HEK293 (cell line): ENCODE measurements at regions of chr17 and their contacts with region 1.

Region 1: GRCh38 chr17:59311130-59311920 is 20.1 kb upstream of the YPEL2 start:
- H3K4me3 ChIP-seq: no peak overlapping the region
- H3K27ac ChIP-seq: no peak overlapping the region
- H3K4me1 ChIP-seq: no peaks in the 10 kb centered on the region
- CTCF ChIP-seq: peak; percentile 88

Region 2: GRCh38 chr17:59026176-59026939 is 285.0 kb before region 1 on chr17:
- CTCF ChIA-PET with region 1: no interaction called
- POLR2A ChIA-PET with region 1: no interaction called
- H3K4me3 ChIP-seq: no peak overlapping the region
- H3K27ac ChIP-seq: no peak overlapping the region
- H3K4me1 ChIP-seq: no peaks in the 10 kb centered on the region
- CTCF ChIP-seq: no peak

Region 3: GRCh38 chr17:59220376-59221158 is 90.8 kb before region 1 on chr17 and contains the start of gene GDPD1:
- CTCF ChIA-PET with region 1: interaction called, 11 read pairs
- POLR2A ChIA-PET with region 1: interaction called, 3 read pairs
- H3K4me3 ChIP-seq: peak within 1 kb of the TSS; percentile 75
- H3K27ac ChIP-seq: peak within 1 kb of the TSS; percentile 88
- H3K4me1 ChIP-seq: no peaks in the 10 kb centered on the region
- CTCF ChIP-seq: peak; percentile 88

Region 4: DNA sequence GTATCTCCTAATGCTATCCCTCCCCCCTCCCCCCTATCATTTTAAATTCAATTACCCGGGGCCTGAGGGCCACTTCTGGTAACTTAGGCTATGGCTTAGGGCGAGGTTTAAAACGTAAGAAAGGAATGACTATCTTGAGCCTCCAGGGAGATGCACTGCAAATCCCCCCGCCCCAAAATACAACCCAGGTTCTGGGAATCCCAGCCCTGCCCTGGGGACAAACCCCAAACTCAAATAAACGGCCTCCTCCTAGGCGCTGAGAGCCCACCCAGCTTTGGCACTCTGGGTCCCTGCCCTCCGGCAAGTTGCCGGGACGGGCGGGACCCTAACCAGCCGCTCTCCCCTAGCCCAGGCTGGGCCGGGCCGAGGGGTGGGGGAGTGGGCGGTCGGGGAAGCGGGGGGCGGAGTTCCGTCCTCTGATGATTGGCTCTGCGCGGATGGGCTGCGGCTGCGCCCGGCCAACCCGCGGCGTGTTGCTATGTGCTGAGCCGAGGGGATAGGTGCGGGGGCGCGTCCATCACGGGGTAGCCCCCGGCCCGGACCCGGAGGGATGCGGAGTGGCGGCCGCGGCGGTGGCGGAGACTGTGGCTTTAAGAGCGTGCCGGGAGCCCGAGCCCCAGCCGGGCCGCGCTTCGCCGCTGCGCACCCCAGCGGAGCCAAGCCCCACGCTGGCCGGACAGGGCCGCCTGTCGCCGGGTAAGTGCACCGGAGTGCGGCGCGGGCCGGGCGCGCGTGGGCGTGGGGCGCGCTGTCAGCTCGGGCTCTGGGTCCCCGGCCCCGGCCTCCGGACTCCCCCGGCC is 20.0 kb after region 1 on chr17 and contains the start of gene YPEL2:
- CTCF ChIA-PET with region 1: interaction called, 27 read pairs
- POLR2A ChIA-PET with region 1: no interaction called
- H3K4me3 ChIP-seq: peak within 1 kb of the TSS; percentile 81
- H3K27ac ChIP-seq: peak within 1 kb of the TSS; percentile 78; the same call in 1 of the 2 replicates
- H3K4me1 ChIP-seq: peaks cover 25% of the 10 kb centered on the region
- CTCF ChIP-seq: no peak

Region 5: DNA sequence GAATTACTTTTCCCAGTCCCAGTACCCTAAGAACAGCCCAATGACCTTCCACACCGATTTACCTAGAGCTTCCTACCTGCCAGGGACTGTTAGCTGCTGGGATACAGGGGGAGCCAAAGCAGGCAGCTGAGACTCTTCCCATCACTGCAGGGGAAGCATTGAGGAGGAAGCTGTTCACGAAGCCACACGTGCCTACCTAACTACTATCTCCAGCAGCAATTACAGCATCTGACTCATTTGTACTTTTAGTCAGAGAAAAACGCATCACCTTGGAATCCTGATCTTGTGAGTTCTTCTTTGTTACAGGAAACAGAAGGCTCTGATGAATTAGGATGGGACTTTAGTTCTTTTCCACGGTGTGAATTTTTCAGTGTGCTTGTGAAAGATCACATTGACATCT is 140.4 kb after region 1 on chr17:
- CTCF ChIA-PET with region 1: interaction called, 290 read pairs
- POLR2A ChIA-PET with region 1: no interaction called
- H3K4me3 ChIP-seq: no peak overlapping the region
- H3K27ac ChIP-seq: no peak overlapping the region
- H3K4me1 ChIP-seq: no peaks in the 10 kb centered on the region
- CTCF ChIP-seq: no peak

Region 6: GRCh38 chr17:59558977-59559376 is 247.7 kb after region 1 on chr17:
- CTCF ChIA-PET with region 1: interaction called, 14 read pairs
- POLR2A ChIA-PET with region 1: no interaction called
- H3K4me3 ChIP-seq: no peak overlapping the region
- H3K27ac ChIP-seq: no peak overlapping the region
- H3K4me1 ChIP-seq: no peaks in the 10 kb centered on the region
- CTCF ChIP-seq: no peak